ENCODE measurements at regions of chr16 and their contacts with region 1.

Region 1: GRCh38 chr16:46908540-46909372 is 24.6 kb downstream of the GPT2 start:
- DNase-seq: peak; percentile 70
- H3K4me3 Mint-ChIP-seq: no peak overlapping the region
- H3K27ac Mint-ChIP-seq: no peak overlapping the region
- H3K4me1 Mint-ChIP-seq: no peaks in the 10 kb centered on the region
- H3K27me3 Mint-ChIP-seq: no peaks in the 10 kb centered on the region
- CTCF ChIP-seq: peak; percentile 49

Region 2: GRCh38 chr16:46673320-46674013 is 235.3 kb before region 1 on chr16:
- CTCF ChIA-PET with region 1: interaction called, 8 read pairs
- POLR2A ChIA-PET with region 1: no interaction called
- intact Hi-C with region 1: loop called (anchors 1 kb)
- DNase-seq: peak; percentile 69
- H3K4me3 Mint-ChIP-seq: no peak overlapping the region
- H3K27ac Mint-ChIP-seq: no peak overlapping the region
- H3K4me1 Mint-ChIP-seq: no peaks in the 10 kb centered on the region
- H3K27me3 Mint-ChIP-seq: no peaks in the 10 kb centered on the region
- CTCF ChIP-seq: peak; percentile 89

Region 3: DNA sequence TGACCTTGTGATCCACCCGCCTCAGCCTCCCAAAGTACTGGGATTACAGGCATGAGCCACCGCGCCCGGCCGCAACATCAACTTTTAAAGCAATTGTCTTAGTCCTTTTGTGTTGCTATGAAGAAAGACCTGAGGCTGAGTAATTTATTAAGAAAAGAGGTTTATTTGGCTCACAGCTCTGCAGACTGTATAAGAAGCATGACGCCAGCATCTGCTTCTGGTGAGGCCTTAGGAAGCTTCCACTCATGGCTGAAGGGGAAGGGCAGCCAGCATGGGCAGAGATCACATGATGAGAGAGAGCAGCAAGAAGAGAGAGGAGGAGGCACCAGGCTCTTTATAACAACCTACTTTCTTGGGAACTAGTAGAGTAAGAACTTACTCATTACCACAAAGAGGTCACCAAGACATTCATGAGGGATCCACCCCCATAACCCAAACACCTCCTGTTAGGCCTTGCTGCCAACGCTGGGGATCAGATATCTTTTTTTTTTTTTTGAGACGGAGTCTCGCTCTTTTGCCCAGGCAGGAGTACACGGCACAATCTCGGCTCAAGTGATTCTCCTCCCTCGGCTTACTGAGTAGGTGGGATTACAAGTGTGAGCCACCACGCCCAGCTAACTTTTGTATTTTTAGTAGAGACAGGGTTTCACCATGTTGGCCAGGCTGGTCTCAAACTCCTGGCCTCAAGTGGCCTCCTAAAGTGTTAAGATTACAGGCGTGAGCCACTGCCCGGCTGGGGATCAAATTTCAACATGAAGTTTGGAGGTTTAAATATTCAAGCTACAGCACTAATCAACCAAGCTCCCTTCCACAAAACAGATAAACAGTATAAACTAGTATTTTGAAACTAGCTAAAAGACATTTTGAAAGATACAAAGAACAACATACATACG is 46.0 kb before region 1 on chr16:
- CTCF ChIA-PET with region 1: interaction called, 12 read pairs
- POLR2A ChIA-PET with region 1: interaction called, 5 read pairs
- intact Hi-C with region 1: no loop called
- DNase-seq: no peak
- H3K4me3 Mint-ChIP-seq: no peak overlapping the region
- H3K27ac Mint-ChIP-seq: peak overlapping the region; percentile 56
- H3K4me1 Mint-ChIP-seq: peaks cover 6% of the 10 kb centered on the region
- H3K27me3 Mint-ChIP-seq: no peaks in the 10 kb centered on the region
- CTCF ChIP-seq: no peak

Region 4: DNA sequence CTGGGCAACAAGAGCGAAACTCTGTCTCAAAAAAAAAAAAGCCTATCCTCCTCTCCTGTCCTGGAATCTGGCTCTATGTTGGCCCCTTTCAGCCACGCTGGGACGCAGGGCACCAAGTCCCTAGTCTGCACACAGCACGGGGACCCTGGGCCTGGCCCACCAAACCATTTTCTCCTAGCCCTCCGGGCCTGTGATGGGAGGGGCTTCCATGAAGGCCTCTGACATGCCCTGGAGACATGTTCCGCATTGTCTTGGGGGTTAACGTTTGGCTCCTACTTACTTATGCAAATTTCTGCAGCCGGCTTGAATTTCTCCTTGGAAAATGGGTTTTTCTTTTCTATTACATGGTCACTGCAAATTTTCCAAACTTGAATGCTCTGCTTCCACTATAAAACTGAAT is 37.2 kb before region 1 on chr16:
- CTCF ChIA-PET with region 1: interaction called, 24 read pairs
- POLR2A ChIA-PET with region 1: no interaction called
- intact Hi-C with region 1: no loop called
- DNase-seq: no peak
- H3K4me3 Mint-ChIP-seq: no peak overlapping the region
- H3K27ac Mint-ChIP-seq: no peak overlapping the region
- H3K4me1 Mint-ChIP-seq: no peaks in the 10 kb centered on the region
- H3K27me3 Mint-ChIP-seq: no peaks in the 10 kb centered on the region
- CTCF ChIP-seq: no peak

Region 5: GRCh38 chr16:46883690-46884512 is 24.9 kb before region 1 on chr16 and contains the start of gene GPT2:
- CTCF ChIA-PET with region 1: interaction called, 46 read pairs
- POLR2A ChIA-PET with region 1: interaction called, 4 read pairs
- intact Hi-C with region 1: no loop called
- DNase-seq: peak; percentile 97
- H3K4me3 Mint-ChIP-seq: peak within 1 kb of the TSS; percentile 73
- H3K27ac Mint-ChIP-seq: peak within 1 kb of the TSS; percentile 90
- H3K4me1 Mint-ChIP-seq: peaks cover 26% of the 10 kb centered on the region
- H3K27me3 Mint-ChIP-seq: no peaks in the 10 kb centered on the region
- CTCF ChIP-seq: peak; percentile 24
- total RNA-seq, gene GPT2: 44.7 and 60.6 TPM in 2 replicates

Region 6: DNA sequence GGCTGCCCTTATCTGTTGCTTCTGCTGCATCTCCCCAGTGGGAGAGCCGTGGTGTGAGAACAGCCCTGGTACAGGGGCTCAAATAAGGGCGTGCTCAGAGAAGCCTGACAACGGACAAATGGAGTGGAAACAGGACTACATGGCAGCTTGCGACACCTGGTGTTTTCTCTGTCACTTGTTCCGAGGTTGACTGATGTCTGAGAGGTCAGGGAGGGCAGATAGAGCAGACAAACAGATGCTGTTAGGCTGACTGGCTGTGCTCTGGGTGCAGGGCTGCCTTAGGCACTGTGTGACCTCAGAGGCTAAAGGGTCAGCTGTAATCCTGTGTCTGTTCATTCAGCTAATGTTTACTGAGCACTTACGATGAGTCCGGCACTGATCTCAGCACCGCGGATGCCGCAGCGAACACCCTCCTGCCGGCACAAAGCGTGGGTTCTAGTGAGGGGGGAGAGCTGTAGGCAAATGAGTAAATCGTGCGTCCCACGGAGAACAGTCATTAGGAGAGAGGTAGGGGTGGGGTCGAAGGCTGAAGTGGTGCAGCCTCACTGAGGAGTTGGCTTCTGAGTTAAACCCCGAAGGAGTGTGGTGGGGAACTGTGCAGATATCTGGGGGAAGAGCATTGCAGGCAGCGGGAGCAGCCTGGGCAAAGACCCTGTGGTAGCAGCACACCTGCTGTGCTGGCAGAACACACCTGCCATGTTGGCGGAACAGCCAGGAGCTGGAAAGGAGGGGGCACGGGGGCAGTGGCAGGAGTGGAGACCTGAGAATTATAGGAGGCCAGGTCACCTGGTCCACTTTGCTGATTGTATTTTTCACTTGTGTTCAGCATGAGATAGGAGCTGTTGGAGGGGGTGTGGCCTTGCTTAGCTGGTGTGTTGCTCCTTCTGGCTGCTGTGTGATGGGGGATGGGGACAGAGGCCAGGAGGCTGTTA is 10.4 kb after region 1 on chr16:
- CTCF ChIA-PET with region 1: interaction called, 26 read pairs
- POLR2A ChIA-PET with region 1: no interaction called
- intact Hi-C with region 1: no loop called
- DNase-seq: no peak
- H3K4me3 Mint-ChIP-seq: no peak overlapping the region
- H3K27ac Mint-ChIP-seq: peak overlapping the region; percentile 8
- H3K4me1 Mint-ChIP-seq: no peaks in the 10 kb centered on the region
- H3K27me3 Mint-ChIP-seq: no peaks in the 10 kb centered on the region
- CTCF ChIP-seq: no peak

Region 7: GRCh38 chr16:46929378-46930332 is 20.9 kb after region 1 on chr16:
- CTCF ChIA-PET with region 1: interaction called, 12 read pairs
- POLR2A ChIA-PET with region 1: no interaction called
- intact Hi-C with region 1: no loop called
- DNase-seq: peak; percentile 57
- H3K4me3 Mint-ChIP-seq: no peak overlapping the region
- H3K27ac Mint-ChIP-seq: no peak overlapping the region
- H3K4me1 Mint-ChIP-seq: no peaks in the 10 kb centered on the region
- H3K27me3 Mint-ChIP-seq: no peaks in the 10 kb centered on the region
- CTCF ChIP-seq: peak; percentile 87

Region 8: GRCh38 chr16:47229053-47230050 is 320.6 kb after region 1 on chr16:
- CTCF ChIA-PET with region 1: no interaction called
- POLR2A ChIA-PET with region 1: no interaction called
- intact Hi-C with region 1: no loop called
- DNase-seq: no peak
- H3K4me3 Mint-ChIP-seq: no peak overlapping the region
- H3K27ac Mint-ChIP-seq: peak overlapping the region; percentile 4
- H3K4me1 Mint-ChIP-seq: no peaks in the 10 kb centered on the region
- H3K27me3 Mint-ChIP-seq: no peaks in the 10 kb centered on the region
- CTCF ChIP-seq: no peak

Measured in MCF 10A (cell line).